ENCODE measurements at regions of chr9 and their contacts with region 1.

Region 1: GRCh38 chr9:122991370-122991830 is 42.1 kb upstream of the GPR21 start:
- DNase-seq: no peak
- H3K4me3 ChIP-seq: no peak overlapping the region
- H3K27ac ChIP-seq: peak overlapping the region; percentile 21 to 38 (median 27)
- H3K4me1 ChIP-seq: no peaks in the 10 kb centered on the region
- H3K27me3 ChIP-seq: no peaks in the 10 kb centered on the region
- CTCF ChIP-seq: peak; percentile 21 to 67 (median 56)
- EP300 ChIP-seq: no peak
- POLR2A ChIP-seq: no peak

Region 2: GRCh38 chr9:122827761-122828093 is 163.7 kb before region 1 on chr9:
- intact Hi-C with region 1: no loop called
- DNase-seq: no peak
- H3K4me3 ChIP-seq: peak overlapping the region; percentile 94 to 97 (median 94)
- H3K27ac ChIP-seq: peak overlapping the region; percentile 98 to 99 (median 98)
- H3K4me1 ChIP-seq: peaks cover 0 to 32% (median 29%) of the 10 kb centered on the region in 4 donors
- H3K27me3 ChIP-seq: no peaks in the 10 kb centered on the region
- CTCF ChIP-seq: no peak
- EP300 ChIP-seq: no peak
- POLR2A ChIP-seq: no peak

Region 3: DNA sequence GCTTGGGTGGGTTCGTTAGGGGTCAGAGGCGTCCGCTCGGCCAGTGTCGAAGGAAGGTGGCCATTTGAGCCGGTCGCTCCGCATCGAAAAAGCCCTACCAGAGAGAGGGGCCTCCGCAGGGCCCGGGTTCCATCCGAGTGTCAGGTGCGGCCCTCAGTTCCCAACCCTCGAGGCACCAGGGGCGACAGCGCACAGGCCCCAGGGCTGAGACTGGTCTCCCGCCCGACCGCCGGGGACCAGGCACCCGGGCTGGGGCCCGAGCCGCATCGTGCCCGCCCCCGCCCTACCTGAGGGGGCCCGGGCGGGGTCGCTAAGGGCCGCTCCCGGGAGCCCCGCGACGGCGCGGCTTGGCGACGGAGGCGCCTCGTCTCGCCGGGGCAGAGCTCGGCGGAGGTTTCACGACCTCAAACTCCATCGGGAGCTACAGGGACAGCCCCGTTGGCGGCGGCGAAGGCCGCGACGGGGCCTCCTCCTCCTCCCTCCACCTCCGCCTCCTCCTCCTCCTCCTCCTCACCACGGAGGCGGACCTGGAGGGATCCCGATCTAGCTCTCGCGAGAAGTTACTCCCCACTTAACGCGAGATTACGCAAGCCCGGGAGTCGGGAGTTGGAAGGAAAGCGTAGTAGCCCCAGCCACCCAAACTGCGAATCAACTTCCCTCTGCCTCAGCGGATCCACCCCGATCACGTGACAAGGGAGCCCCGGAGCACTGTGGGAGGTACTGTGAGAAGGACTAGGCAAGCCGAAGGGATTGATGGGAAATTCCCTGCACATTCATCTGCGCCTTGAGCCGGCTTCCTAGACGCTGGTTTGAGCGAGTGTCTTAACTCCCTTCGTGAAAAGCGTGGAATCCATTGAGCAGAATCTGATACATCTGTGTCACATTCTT is 86.3 kb before region 1 on chr9 and contains the start of gene RC3H2:
- intact Hi-C with region 1: loop called (anchors 2 kb)
- DNase-seq: peak; percentile 100
- H3K4me3 ChIP-seq: peak within 1 kb of the TSS; percentile 54 to 97 (median 94)
- H3K27ac ChIP-seq: peak within 1 kb of the TSS; percentile 97 to 99 (median 98)
- H3K4me1 ChIP-seq: peaks cover 0 to 45% (median 39%) of the 10 kb centered on the region in 4 donors
- H3K27me3 ChIP-seq: no peaks in the 10 kb centered on the region
- CTCF ChIP-seq: no peak
- EP300 ChIP-seq: peak in 1 of 4 donors; percentile 50
- POLR2A ChIP-seq: peak; percentile 92 to 93
- total RNA-seq, gene RC3H2: 43.8 to 49.5 (median 46.8) TPM

Region 4: DNA sequence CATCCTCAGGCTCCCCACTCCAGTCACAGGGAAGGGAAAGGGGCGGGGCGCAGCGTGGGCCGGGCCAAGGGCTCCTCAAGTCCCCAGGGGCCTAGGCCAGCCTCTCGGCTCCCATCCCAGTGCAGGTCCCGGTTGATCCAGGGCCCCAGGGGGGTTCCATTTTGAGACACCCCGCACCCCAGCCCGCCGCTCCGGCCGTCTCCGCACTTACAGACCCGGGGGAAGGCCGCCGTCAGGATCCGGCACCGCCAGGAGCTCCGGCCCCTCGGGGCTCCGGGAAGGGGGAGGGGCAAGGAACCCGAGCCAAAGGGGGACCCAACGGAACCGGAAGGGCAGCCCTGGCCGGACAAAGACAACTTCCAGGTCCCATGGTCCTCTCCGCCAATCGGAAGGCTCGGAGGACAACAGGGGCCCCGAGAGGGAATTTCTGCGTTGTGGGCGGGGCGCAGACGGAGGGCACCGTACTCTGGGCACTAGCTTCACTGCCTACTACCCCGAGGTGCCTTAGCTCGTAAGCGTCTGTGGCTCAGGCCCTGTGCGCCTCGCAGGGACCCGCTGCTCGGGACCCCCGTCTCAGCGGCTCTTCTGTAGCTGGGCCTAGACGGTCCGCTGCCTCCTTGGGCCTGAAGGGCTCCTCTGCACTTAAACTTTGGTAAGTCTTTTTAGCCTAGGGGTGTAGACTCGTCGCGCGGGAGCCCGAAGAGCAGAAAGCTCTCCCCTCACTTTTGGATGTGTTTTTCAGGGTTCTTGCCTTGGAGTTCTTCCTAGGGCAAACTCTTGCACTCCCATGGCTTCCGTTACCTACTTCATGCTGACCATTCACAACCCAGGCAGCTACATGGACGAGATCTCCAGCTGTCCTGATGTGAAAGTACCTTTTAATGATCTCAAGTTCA is 59.9 kb before region 1 on chr9 and contains the start of gene ZBTB26:
- intact Hi-C with region 1: no loop called
- DNase-seq: peak; percentile 97
- H3K4me3 ChIP-seq: peak within 1 kb of the TSS; percentile 80 to 93 (median 90)
- H3K27ac ChIP-seq: peak within 1 kb of the TSS; percentile 77 to 90 (median 89)
- H3K4me1 ChIP-seq: peaks cover 0 to 41% (median 34%) of the 10 kb centered on the region in 4 donors
- H3K27me3 ChIP-seq: no peaks in the 10 kb centered on the region
- CTCF ChIP-seq: no peak
- EP300 ChIP-seq: peak in 1 of 4 donors; percentile 15
- POLR2A ChIP-seq: no peak
- total RNA-seq, gene ZBTB26: 9.2 to 13.3 (median 11.4) TPM

Region 5: GRCh38 chr9:122949696-122950095 is 41.7 kb before region 1 on chr9:
- intact Hi-C with region 1: loop called (anchors 5 kb)
- DNase-seq: no peak
- H3K4me3 ChIP-seq: no peak overlapping the region
- H3K27ac ChIP-seq: no peak overlapping the region
- H3K4me1 ChIP-seq: peaks cover 0 to 79% (median 61%) of the 10 kb centered on the region in 4 donors
- H3K27me3 ChIP-seq: no peaks in the 10 kb centered on the region
- CTCF ChIP-seq: no peak
- EP300 ChIP-seq: no peak
- POLR2A ChIP-seq: no peak

Measured in sigmoid colon (tissue), 7 donors.